ENCODE measurements at regions of chr1 and their contacts with region 1.

Region 1: DNA sequence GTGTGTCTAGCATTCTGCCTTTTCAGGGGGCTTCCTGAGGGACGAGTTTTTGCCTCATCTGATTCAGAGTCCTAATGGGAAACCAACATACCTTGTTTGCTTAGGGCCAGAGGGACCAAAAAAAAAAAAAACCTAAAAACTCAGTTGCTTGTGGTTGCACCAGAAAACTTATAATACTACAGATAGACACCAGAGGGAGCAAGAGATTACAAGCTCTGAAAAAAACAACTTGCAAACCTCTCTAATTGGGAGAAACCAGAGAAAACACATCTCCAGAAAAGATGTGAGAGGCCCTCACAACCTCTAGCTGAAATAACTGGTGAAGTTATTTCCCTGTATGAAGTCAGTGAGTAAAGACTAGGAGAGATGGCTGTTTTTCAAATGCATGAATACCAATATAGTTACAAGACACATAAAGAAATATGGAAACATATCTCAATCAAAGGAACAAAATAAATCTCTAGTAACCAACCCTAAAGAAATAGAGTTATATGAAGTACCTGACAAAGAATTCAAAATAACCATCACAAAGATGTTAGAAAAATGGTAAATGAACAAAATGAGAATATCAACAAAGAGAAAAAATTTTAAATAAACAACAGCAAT is 233.7 kb upstream of the NFIA start:
- DNase-seq: peak; percentile 58 to 70 (median 66)
- H3K4me3 ChIP-seq: no peak overlapping the region
- H3K27ac ChIP-seq: no peak overlapping the region
- H3K4me1 ChIP-seq: no peaks in the 10 kb centered on the region
- H3K27me3 ChIP-seq: no peaks in the 10 kb centered on the region

Region 2: DNA sequence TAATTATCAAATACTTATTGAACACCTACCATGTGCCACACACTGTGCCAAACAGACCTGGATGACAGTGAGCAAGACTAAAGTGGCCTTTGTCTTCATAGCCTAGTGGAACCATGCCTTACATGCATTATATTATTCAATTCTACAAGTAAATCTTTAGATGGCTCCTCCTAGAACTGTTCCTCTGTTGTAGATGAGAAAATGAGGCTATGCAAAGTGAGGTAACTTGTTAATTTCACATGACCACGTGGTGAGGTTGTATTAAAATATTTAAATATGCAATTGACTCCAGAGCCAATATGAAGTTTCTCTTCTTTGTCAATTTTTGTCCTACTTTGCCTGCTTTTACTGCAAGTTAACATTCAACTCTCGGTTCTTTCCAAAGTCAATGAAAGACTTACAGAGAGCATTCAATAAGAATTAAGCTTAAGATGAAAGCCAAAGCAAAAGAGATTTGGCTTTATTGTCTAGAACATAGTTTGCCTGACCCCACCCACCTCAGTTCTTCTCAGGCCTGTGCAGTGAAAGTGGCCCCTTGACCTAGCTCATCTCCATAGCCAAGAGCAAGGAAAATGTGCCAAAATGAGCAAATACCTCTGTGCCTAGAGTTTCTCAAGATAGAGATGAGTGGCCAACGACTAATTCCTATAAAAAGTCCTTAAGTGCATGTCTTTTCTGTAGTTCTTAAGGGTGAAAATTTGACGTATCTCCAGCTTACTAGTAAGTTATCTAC is 29.6 kb before region 1 on chr1:
- CTCF ChIA-PET with region 1: no interaction called
- POLR2A ChIA-PET with region 1: no interaction called
- DNase-seq: no peak
- H3K4me3 ChIP-seq: no peak overlapping the region
- H3K27ac ChIP-seq: no peak overlapping the region
- H3K4me1 ChIP-seq: peaks cover 0 to under 1% (median 0%) of the 10 kb centered on the region in 4 experiments
- H3K27me3 ChIP-seq: no peaks in the 10 kb centered on the region

Region 3: GRCh38 chr1:60833173-60833572 is 15.5 kb before region 1 on chr1:
- CTCF ChIA-PET with region 1: interaction called, 37 read pairs
- POLR2A ChIA-PET with region 1: no interaction called
- DNase-seq: peak; percentile 22 to 66 (median 46)
- H3K4me3 ChIP-seq: no peak overlapping the region
- H3K27ac ChIP-seq: no peak overlapping the region
- H3K4me1 ChIP-seq: peaks cover 17 to 24% (median 20%) of the 10 kb centered on the region in 4 experiments
- H3K27me3 ChIP-seq: no peaks in the 10 kb centered on the region

Region 4: GRCh38 chr1:60866917-60867531 is 18.3 kb after region 1 on chr1:
- CTCF ChIA-PET with region 1: no interaction called
- POLR2A ChIA-PET with region 1: no interaction called
- DNase-seq: peak in 1 of 3 donors; percentile 27
- H3K4me3 ChIP-seq: no peak overlapping the region
- H3K27ac ChIP-seq: no peak overlapping the region
- H3K4me1 ChIP-seq: peaks cover 0 to 3% (median 0%) of the 10 kb centered on the region in 4 experiments
- H3K27me3 ChIP-seq: no peaks in the 10 kb centered on the region

Region 5: DNA sequence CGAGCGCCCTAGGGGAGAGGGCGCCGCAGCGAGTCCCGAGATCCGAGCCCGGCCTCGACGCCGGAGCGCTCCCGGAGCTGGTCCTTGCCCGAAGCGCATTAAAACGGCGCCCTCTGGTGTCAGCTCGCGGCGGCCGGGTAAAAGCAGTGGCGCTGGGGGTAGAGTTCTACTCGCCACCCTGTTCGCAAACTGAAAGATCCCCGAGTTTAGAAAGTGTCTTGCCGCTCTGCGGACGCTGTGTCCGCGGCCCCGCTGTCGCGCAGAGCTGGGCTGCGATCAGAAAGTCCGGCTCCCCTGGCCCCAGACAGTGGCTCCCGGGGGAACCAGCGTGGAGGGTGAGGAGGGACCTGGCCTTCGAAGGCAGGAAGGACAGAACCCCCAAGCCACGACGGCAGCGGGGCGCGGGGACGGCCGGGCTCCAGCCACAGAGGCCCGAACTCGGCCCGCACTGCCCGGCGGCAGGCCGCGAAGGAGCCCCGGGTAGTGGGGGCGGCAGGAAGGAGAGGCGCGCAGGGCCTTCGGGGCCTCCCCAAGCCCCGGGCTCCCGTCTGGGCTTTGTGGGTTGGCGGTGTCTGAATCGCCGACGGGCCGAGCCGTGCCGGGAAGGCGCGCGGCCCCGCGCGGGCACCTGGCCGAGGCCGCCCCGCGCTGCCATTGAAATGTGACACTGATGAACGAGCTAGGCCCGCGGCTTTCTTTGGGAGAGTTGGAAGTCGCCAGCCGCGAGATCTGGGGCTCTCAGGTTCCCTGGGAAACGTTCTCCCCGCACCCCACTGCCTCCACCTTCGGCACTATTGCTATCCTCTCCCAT is 194.5 kb after region 1 on chr1:
- CTCF ChIA-PET with region 1: interaction called, 31 read pairs
- POLR2A ChIA-PET with region 1: no interaction called
- DNase-seq: peak; percentile 88 to 93 (median 91)
- H3K4me3 ChIP-seq: peak overlapping the region; percentile 43 to 81 (median 65)
- H3K27ac ChIP-seq: no peak overlapping the region
- H3K4me1 ChIP-seq: peaks cover 2 to 9% (median 4%) of the 10 kb centered on the region in 4 experiments
- H3K27me3 ChIP-seq: peaks cover 0 to 8% (median 0%) of the 10 kb centered on the region in 5 experiments

Measured in common myeloid progenitor, CD34-positive (primary cell).